ENCODE measurements at regions of chr11 and their contacts with region 1.

Region 1: GRCh38 chr11:4636962-4637661 is at the start of gene OR51D1:
- DNase-seq: peak; percentile 66
- H3K4me3 ChIP-seq: no peak within 1 kb of the TSS
- H3K27ac ChIP-seq: no peak within 1 kb of the TSS
- H3K4me1 ChIP-seq: no peaks in the 10 kb centered on the region
- H3K27me3 ChIP-seq: peaks cover 0 to 1% of the 10 kb centered on the region in 2 experiments
- CTCF ChIP-seq: peak; percentile 82 to 93
- POLR2A ChIP-seq: no peak
- total RNA-seq, gene OR51D1: not detected in 2 replicates

Region 2: GRCh38 chr11:4626207-4627099 is 10.7 kb before region 1 on chr11:
- CTCF ChIA-PET with region 1: interaction called, 54 read pairs
- POLR2A ChIA-PET with region 1: no interaction called
- dilution Hi-C with region 1: no loop called
- intact Hi-C with region 1: no loop called
- DNase-seq: peak; percentile 37
- H3K4me3 ChIP-seq: no peak overlapping the region
- H3K27ac ChIP-seq: no peak overlapping the region
- H3K4me1 ChIP-seq: no peaks in the 10 kb centered on the region
- H3K27me3 ChIP-seq: peaks cover 2% of the 10 kb centered on the region in 2 experiments
- CTCF ChIP-seq: peak; percentile 54 to 63
- POLR2A ChIP-seq: no peak

Region 3: GRCh38 chr11:5004424-5005274 is 367.5 kb after region 1 on chr11:
- CTCF ChIA-PET with region 1: interaction called, 10 read pairs
- POLR2A ChIA-PET with region 1: no interaction called
- dilution Hi-C with region 1: no loop called
- intact Hi-C with region 1: loop called (anchors 1 kb)
- DNase-seq: peak; percentile 55
- H3K4me3 ChIP-seq: no peak overlapping the region
- H3K27ac ChIP-seq: no peak overlapping the region
- H3K4me1 ChIP-seq: no peaks in the 10 kb centered on the region
- H3K27me3 ChIP-seq: no peaks in the 10 kb centered on the region
- CTCF ChIP-seq: peak; percentile 27 to 47
- POLR2A ChIP-seq: no peak

Region 4: GRCh38 chr11:5380740-5381342 is 743.7 kb after region 1 on chr11:
- CTCF ChIA-PET with region 1: interaction called, 9 read pairs
- POLR2A ChIA-PET with region 1: no interaction called
- dilution Hi-C with region 1: no loop called
- intact Hi-C with region 1: loop called (anchors 1 kb)
- DNase-seq: peak; percentile 69
- H3K4me3 ChIP-seq: no peak overlapping the region
- H3K27ac ChIP-seq: no peak overlapping the region
- H3K4me1 ChIP-seq: no peaks in the 10 kb centered on the region
- H3K27me3 ChIP-seq: peaks cover 0 to 2% of the 10 kb centered on the region in 2 experiments
- CTCF ChIP-seq: peak; percentile 67 to 84
- POLR2A ChIP-seq: no peak

Region 5: DNA sequence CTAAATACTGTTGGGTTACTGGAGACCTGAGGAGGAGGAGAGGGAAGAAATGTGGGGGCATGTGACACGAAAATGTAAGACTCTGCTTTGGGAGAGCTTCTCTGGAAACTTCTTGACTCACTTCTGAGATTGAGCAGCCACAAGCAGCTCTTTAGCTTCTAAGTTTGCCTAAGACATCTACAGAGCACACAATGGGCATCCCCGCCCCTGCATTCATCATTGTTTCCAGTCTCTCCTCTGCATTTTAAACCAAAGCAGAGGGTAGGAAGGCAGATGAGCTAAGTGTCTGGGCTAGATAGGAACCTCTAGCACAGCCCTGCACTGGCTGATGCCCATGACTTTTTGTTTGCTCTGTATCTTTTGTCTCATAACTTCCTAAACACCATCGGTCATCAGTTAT is 849.3 kb after region 1 on chr11:
- CTCF ChIA-PET with region 1: no interaction called
- POLR2A ChIA-PET with region 1: no interaction called
- dilution Hi-C with region 1: no loop called
- intact Hi-C with region 1: no loop called
- DNase-seq: no peak
- H3K4me3 ChIP-seq: no peak overlapping the region
- H3K27ac ChIP-seq: no peak overlapping the region
- H3K4me1 ChIP-seq: no peaks in the 10 kb centered on the region
- H3K27me3 ChIP-seq: peaks cover 0 to 2% of the 10 kb centered on the region in 2 experiments
- CTCF ChIP-seq: no peak
- POLR2A ChIP-seq: no peak